ENCODE measurements at regions of chr9 and their contacts with region 1.

Region 1: GRCh38 chr9:76873056-76873792 is 32.7 kb downstream of the PRUNE2 start:
- DNase-seq: no peak
- H3K4me3 ChIP-seq: no peak overlapping the region
- H3K4me1 ChIP-seq: no peaks in the 10 kb centered on the region
- H3K27me3 ChIP-seq: no peaks in the 10 kb centered on the region

Region 2: GRCh38 chr9:76932757-76933156 is 59.5 kb after region 1 on chr9:
- in situ Hi-C with region 1: loop called (anchors 10 kb)
- DNase-seq: no peak
- H3K4me3 ChIP-seq: no peak overlapping the region
- H3K4me1 ChIP-seq: no peaks in the 10 kb centered on the region
- H3K27me3 ChIP-seq: no peaks in the 10 kb centered on the region

Region 3: DNA sequence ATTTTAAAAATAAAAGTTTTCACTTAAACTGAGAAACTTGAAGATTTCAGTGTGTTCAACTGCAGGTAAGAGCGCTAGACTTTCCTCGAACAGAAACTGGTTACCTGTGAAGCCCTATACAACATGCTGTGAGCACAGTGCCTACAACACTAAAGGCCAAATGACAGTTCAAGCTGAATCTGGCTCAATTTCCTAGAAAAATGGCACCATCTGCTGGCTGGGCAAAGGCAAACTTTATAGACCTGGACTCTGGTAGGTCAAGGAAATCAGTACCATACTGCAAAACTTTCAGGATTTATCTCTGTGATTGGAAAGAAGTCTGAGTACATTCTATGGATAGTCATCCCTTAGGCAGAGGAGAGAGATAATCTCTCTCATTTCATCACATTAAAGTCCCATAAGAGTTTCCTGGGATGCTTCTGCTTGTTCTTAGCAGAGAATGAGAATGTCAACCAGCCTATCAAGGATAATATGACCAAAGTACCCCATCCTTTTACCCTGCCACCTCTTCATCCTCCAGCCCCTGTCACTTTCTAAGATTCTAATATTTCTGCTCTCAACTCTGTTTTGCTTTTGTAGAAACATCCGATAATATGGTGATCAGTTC is 114.5 kb after region 1 on chr9:
- in situ Hi-C with region 1: no loop called
- DNase-seq: peak in 1 of 2 experiments; percentile 17
- H3K4me3 ChIP-seq: no peak overlapping the region
- H3K4me1 ChIP-seq: no peaks in the 10 kb centered on the region
- H3K27me3 ChIP-seq: peaks cover 9% of the 10 kb centered on the region; the same call in 1 of the 2 replicates

Measured in HAP-1 (cell line).